Tibial artery (tissue), 4 donors: ENCODE measurements at regions of chr2 and their contacts with region 1.

Region 1: GRCh38 chr2:290090-290722 is 2.3 kb upstream of the ALKAL2 start:
- DNase-seq: peak; percentile 72 to 87
- H3K4me3 ChIP-seq: peak overlapping the region; percentile 55 to 62
- H3K27ac ChIP-seq: peak overlapping the region; percentile 68 to 83
- H3K4me1 ChIP-seq: peaks cover 0 to 43% (median 33%) of the 10 kb centered on the region in 4 donors
- H3K27me3 ChIP-seq: peaks cover 0 to 35% of the 10 kb centered on the region in 2 donors
- CTCF ChIP-seq: peak; percentile 77 to 78

Region 2: DNA sequence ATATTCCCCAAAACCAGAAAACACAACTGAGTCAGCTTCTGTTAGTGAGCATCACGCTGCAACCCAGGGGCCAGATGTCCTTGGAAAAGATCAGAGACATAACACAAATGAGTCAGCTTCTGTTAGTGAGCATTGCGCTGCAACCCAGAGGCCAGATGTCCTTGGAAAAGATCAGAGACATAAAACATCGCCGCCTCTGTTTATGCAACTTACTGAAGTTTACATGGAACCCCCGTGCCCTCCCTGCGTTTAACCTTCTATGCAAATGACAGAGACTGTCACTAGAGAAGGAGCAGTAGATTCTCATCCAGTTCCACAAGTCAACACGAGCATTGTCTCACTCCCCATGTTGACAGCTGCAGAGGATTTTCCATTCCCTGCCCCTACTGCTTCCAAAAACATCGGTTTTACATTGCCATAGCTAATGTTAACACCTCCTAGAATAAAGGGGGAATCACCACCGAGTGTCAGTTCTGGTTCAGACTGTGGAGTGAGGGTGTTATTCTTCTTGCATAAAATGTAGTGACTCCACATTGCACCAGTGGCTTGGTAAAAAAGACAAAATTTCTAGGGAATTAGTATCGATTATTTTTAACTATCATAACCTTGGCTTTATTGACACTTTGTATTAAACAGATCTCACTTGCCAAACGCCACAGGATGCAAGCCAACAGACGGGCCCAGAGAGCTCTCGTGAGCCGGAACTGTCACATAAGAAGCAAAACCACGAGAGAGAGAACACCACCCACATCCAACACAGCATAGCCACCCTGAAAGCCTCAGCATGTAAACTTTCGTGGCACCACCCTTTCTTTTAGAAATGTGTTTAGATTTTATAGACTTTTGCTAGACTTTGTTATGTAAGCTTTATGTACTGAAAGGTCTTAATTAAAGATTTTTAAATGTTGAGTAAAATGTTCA is 114.1 kb before region 1 on chr2:
- intact Hi-C with region 1: loop called (anchors 1 kb)
- DNase-seq: no peak
- H3K4me3 ChIP-seq: no peak overlapping the region
- H3K27ac ChIP-seq: no peak overlapping the region
- H3K4me1 ChIP-seq: peaks cover 0 to 17% (median 0%) of the 10 kb centered on the region in 4 donors
- H3K27me3 ChIP-seq: no peaks in the 10 kb centered on the region
- CTCF ChIP-seq: no peak

Region 3: GRCh38 chr2:636641-637405 is 346.6 kb after region 1 on chr2:
- intact Hi-C with region 1: loop called (anchors 10 kb)
- DNase-seq: peak; percentile 67 to 82
- H3K4me3 ChIP-seq: peak overlapping the region; percentile 27 to 45
- H3K27ac ChIP-seq: no peak overlapping the region
- H3K4me1 ChIP-seq: peaks cover 0 to 8% (median 6%) of the 10 kb centered on the region in 4 donors
- H3K27me3 ChIP-seq: peaks cover 0 to 1% of the 10 kb centered on the region in 2 donors
- CTCF ChIP-seq: peak; percentile 75 to 84